Spleen (tissue), 13 donors: ENCODE measurements at regions of chr1 and their contacts with region 1.

Region 1: GRCh38 chr1:202315576-202316168 is 26.1 kb downstream of the UBE2T start:
- DNase-seq: peak; percentile 90
- H3K4me3 ChIP-seq: no peak overlapping the region
- H3K27ac ChIP-seq: no peak overlapping the region
- H3K4me1 ChIP-seq: peaks cover 4 to 15% (median 7%) of the 10 kb centered on the region in 6 donors
- H3K27me3 ChIP-seq: peaks cover 0 to 17% (median 0%) of the 10 kb centered on the region in 7 donors
- CTCF ChIP-seq: peak; percentile 68 to 93 (median 88)
- POLR2A ChIP-seq: no peak

Region 2: GRCh38 chr1:202264300-202264699 is 51.4 kb before region 1 on chr1:
- intact Hi-C with region 1: loop called (anchors 10 kb)
- DNase-seq: peak; percentile 28
- H3K4me3 ChIP-seq: no peak overlapping the region
- H3K27ac ChIP-seq: no peak overlapping the region
- H3K4me1 ChIP-seq: no peaks in the 10 kb centered on the region
- H3K27me3 ChIP-seq: peaks cover 0 to 44% (median 0%) of the 10 kb centered on the region in 7 donors
- CTCF ChIP-seq: no peak
- POLR2A ChIP-seq: no peak

Region 3: DNA sequence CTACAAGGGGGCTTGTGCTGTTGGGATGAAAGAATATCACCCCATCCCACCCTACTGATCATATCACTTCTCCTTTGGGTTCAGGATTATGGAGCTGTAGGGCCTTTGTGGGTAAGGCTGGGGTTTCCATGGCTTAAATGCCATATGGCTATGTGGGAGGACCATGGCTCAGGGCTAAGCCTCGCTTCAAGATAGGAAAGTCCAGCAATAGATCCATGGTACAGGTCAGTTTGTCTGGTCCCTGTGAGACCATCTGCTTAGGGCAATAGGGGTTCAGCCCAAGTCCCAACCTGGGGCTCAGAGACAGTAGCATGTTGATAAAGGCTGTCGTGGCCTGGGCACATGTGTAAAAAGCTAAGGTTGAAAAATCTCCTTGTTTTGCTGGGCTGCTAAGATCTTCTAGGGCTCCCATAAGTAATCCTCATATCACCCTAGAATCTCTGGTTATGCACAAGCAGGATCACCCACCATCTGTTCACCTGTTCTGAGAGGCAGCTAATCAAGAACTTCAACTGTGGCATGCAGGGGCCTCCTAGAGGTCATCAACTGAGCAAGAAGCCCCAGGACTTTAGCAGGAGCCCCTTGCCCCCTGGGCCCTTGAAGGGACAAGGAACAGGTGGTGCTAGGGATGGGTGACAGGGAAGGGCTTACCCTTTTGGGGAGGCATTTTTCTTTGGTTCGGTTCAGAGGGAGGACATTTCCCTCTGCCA is 40.5 kb before region 1 on chr1:
- intact Hi-C with region 1: no loop called
- DNase-seq: peak; percentile 18
- H3K4me3 ChIP-seq: no peak overlapping the region
- H3K27ac ChIP-seq: no peak overlapping the region
- H3K4me1 ChIP-seq: peaks cover 0 to 4% (median 0%) of the 10 kb centered on the region in 6 donors
- H3K27me3 ChIP-seq: no peaks in the 10 kb centered on the region
- CTCF ChIP-seq: no peak
- POLR2A ChIP-seq: no peak

Region 4: DNA sequence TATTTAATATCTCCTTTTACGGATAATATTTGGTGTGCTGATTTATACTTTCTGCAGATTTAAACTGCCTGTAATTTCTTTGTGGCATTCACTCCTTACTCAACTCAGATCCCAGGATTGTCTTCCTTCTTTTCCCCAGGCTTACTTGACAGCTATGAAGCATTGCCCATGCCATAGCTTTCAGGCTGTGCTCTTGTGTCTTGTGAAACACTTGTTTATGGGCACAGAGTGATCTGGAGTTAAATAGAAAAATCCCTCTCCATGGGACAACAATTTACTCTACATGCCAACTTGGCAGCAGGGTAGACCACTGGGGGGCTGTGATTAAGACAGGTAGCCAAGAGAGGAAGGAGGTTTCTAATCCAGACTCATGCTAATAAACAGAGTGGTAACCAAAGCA is 90.3 kb after region 1 on chr1:
- intact Hi-C with region 1: no loop called
- DNase-seq: no peak
- H3K4me3 ChIP-seq: no peak overlapping the region
- H3K27ac ChIP-seq: no peak overlapping the region
- H3K4me1 ChIP-seq: peaks cover 0 to 5% (median 0%) of the 10 kb centered on the region in 6 donors
- H3K27me3 ChIP-seq: no peaks in the 10 kb centered on the region
- CTCF ChIP-seq: no peak
- POLR2A ChIP-seq: no peak